ENCODE measurements at regions of chr15 and their contacts with region 1.

Region 1: DNA sequence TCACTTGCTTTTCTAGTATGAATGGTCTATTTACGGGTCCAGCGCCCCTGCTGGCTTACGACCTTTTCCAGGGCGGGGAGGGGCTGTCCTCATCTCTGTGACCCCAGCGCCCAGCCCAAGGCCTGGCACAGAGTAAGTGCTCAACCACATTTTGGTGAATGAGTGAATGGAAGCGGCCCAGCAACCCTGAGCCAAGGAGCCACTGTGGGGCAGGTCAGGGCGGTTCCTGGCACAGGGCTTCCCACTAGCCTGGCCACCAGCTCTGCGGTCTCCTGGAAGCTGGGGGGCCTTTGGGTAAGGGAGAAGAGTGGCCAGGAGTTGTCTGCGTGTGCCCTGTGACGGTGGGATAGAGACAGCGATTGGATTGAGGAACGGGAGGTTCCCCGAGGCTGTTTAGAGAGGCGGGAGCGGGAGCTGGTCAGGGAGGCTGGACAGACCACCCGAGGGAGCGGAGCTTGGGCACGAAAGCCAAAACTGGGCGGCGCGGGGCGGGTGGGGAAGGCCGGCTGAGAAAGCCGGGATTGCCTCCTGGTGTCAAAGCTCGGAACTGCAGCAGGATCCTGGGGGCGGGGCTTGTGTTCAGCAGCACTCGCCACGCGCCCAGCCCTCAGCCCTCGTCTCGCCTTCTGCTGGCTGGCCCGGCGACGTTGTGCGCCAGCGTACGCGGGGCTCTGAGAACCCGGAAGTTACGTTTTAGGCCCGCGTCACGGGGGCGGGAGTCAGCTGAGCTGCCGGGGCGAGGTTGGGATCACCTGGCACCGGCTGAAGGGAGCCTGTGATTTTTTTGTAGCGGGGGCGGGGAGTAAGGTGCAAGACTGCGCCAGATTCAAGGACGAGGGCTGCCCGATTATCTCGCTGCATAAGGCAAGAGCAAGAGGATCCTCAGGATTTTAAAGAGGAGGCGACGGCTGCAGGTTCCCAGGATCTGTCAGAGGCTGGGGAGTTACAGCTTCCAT is at the start of gene VPS18:
- DNase-seq: peak; percentile 99
- H3K4me3 ChIP-seq: peak within 1 kb of the TSS; percentile 70 to 89 (median 78)
- H3K27ac ChIP-seq: peak within 1 kb of the TSS; percentile 90 to 98 (median 92)
- H3K4me1 ChIP-seq: peaks cover 6 to 35% (median 21%) of the 10 kb centered on the region in 4 donors
- H3K27me3 ChIP-seq: no peaks in the 10 kb centered on the region
- CTCF ChIP-seq: peak; percentile 94 to 99 (median 98)
- EP300 ChIP-seq: peak; percentile 57
- POLR2A ChIP-seq: peak; percentile 86
- total RNA-seq, gene VPS18: 18.3 to 58.7 (median 21.0) TPM

Region 2: GRCh38 chr15:40857601-40858341 is 36.2 kb before region 1 on chr15:
- in situ Hi-C with region 1: loop called in 1 of 4 experiments (anchors 5 kb)
- intact Hi-C with region 1: loop called (anchors 2 kb)
- DNase-seq: peak; percentile 91
- H3K4me3 ChIP-seq: no peak overlapping the region
- H3K27ac ChIP-seq: peak overlapping the region; percentile 73 to 83 (median 76)
- H3K4me1 ChIP-seq: peaks cover 3 to 46% (median 37%) of the 10 kb centered on the region in 4 donors
- H3K27me3 ChIP-seq: no peaks in the 10 kb centered on the region
- CTCF ChIP-seq: peak; percentile 95 to 99 (median 98)
- EP300 ChIP-seq: no peak
- POLR2A ChIP-seq: no peak

Measured in transverse colon (tissue), 4 donors.